Endothelial cell of umbilical vein (primary cell): ENCODE measurements at regions of chr2 and their contacts with region 1.

Region 1: GRCh38 chr2:238139196-238140039 is 950 bp downstream of the KLHL30 start:
- DNase-seq: no peak
- H3K4me3 ChIP-seq: no peak overlapping the region
- H3K27ac ChIP-seq: no peak overlapping the region
- H3K4me1 ChIP-seq: no peaks in the 10 kb centered on the region
- H3K27me3 ChIP-seq: no peaks in the 10 kb centered on the region
- CTCF ChIP-seq: peak; percentile 64 to 67
- POLR2A ChIP-seq: no peak

Region 2: GRCh38 chr2:238106686-238107524 is 32.5 kb before region 1 on chr2:
- CTCF ChIA-PET with region 1: no interaction called
- POLR2A ChIA-PET with region 1: no interaction called
- dilution Hi-C with region 1: no loop called
- intact Hi-C with region 1: loop called (anchors 2 kb)
- DNase-seq: no peak
- H3K4me3 ChIP-seq: no peak overlapping the region
- H3K27ac ChIP-seq: no peak overlapping the region
- H3K4me1 ChIP-seq: no peaks in the 10 kb centered on the region
- H3K27me3 ChIP-seq: no peaks in the 10 kb centered on the region
- CTCF ChIP-seq: peak in 1 of 2 donors; percentile 24
- POLR2A ChIP-seq: no peak

Region 3: GRCh38 chr2:238117191-238118154 is 21.9 kb before region 1 on chr2:
- CTCF ChIA-PET with region 1: no interaction called
- POLR2A ChIA-PET with region 1: no interaction called
- dilution Hi-C with region 1: no loop called
- intact Hi-C with region 1: no loop called
- DNase-seq: no peak
- H3K4me3 ChIP-seq: no peak overlapping the region
- H3K27ac ChIP-seq: no peak overlapping the region
- H3K4me1 ChIP-seq: no peaks in the 10 kb centered on the region
- H3K27me3 ChIP-seq: peaks cover 1 to 2% of the 10 kb centered on the region in 2 experiments
- CTCF ChIP-seq: no peak
- POLR2A ChIP-seq: no peak

Region 4: DNA sequence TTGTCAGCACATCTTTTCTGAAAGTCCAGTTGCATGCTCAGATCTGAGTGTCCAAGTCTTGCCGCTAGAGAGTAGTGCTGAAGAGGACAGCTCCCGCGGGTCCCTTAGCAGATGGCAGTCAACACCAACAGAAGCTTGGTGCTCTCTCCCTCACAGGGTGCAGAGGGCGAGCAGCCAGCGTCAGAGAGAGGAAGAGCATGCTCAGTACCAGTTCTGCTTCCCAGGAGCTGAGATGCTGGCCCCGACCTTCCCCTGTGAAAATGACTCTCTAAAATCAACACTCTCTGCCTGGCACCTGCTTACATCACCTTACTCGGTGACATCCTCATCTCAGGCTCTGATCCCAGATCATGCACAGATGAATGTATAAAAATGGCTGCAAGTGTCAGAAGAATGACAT is 622.5 kb after region 1 on chr2:
- CTCF ChIA-PET with region 1: no interaction called
- POLR2A ChIA-PET with region 1: no interaction called
- dilution Hi-C with region 1: no loop called
- intact Hi-C with region 1: no loop called
- DNase-seq: no peak
- H3K4me3 ChIP-seq: no peak overlapping the region
- H3K27ac ChIP-seq: no peak overlapping the region
- H3K4me1 ChIP-seq: no peaks in the 10 kb centered on the region
- H3K27me3 ChIP-seq: no peaks in the 10 kb centered on the region
- CTCF ChIP-seq: no peak
- POLR2A ChIP-seq: no peak